ENCODE measurements at regions of chr11 and their contacts with region 1.

Region 1: GRCh38 chr11:120108154-120108865 is 29.6 kb downstream of the TRIM29 start:
- DNase-seq: peak; percentile 18 to 68 (median 52)
- ATAC-seq: peak; percentile 58
- H3K4me3 ChIP-seq: no peak overlapping the region
- H3K4me3 Mint-ChIP-seq: no peak overlapping the region
- H3K27ac ChIP-seq: no peak overlapping the region
- H3K27ac Mint-ChIP-seq: no peak overlapping the region
- H3K4me1 ChIP-seq: no peaks in the 10 kb centered on the region
- H3K4me1 Mint-ChIP-seq: no peaks in the 10 kb centered on the region
- H3K27me3 ChIP-seq: no peaks in the 10 kb centered on the region
- H3K27me3 Mint-ChIP-seq: peaks cover 18% of the 10 kb centered on the region
- CTCF ChIP-seq: peak; percentile 95

Region 2: GRCh38 chr11:119481021-119481666 is 627.2 kb before region 1 on chr11:
- CTCF ChIA-PET with region 1: no interaction called
- POLR2A ChIA-PET with region 1: no interaction called
- intact Hi-C with region 1: loop called in 1 of 2 experiments (anchors 1 kb)
- DNase-seq: peak; percentile 34 to 73 (median 60)
- ATAC-seq: peak; percentile 51
- H3K4me3 ChIP-seq: no peak overlapping the region
- H3K4me3 Mint-ChIP-seq: no peak overlapping the region
- H3K27ac ChIP-seq: no peak overlapping the region
- H3K27ac Mint-ChIP-seq: no peak overlapping the region
- H3K4me1 ChIP-seq: no peaks in the 10 kb centered on the region
- H3K4me1 Mint-ChIP-seq: no peaks in the 10 kb centered on the region
- H3K27me3 ChIP-seq: peaks cover 2 to 5% of the 10 kb centered on the region in 2 experiments
- H3K27me3 Mint-ChIP-seq: peaks cover 32% of the 10 kb centered on the region
- CTCF ChIP-seq: peak; percentile 78

Region 3: DNA sequence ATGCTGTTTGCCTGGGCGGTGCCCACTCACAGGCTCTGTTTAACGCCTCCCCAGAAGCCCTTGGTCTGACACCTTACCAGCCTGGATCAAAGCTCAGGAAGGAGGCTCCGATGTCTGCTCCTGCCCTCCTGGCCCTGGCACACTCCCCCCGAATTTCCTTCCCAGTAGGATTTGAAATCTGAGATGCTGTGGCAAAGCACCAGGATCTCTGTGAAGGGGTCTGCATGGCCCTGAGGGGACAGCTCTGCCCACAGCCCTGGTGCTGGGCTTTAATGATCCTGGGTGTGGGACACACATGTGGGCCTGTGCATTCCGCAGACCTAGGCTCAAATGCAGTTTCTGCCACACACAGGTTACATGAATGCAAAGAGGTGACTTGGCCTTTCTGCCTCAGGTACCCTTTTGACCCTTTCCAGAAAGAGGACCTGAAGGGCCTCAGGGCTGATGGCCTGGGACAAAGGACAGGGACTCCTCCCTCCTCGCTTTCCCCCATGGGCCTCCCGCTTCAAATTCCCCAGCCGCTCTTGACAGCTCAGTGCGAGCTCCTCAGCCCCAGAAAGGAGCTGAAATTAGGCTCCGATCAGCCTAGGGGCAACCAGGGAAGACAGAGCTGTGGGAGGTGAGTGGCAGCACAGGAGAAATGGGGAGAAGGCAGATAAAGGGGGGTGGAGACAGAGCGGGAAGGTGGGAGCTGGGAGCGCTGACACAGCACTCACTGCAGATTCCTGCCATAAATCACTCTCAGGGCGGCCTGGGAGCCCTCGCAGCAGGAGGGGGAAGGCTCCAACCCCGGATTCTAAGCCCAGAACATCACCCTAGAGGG is 11.7 kb before region 1 on chr11:
- CTCF ChIA-PET with region 1: interaction called, 17 read pairs
- POLR2A ChIA-PET with region 1: no interaction called
- intact Hi-C with region 1: no loop called
- DNase-seq: no peak
- ATAC-seq: no peak
- H3K4me3 ChIP-seq: no peak overlapping the region
- H3K4me3 Mint-ChIP-seq: no peak overlapping the region
- H3K27ac ChIP-seq: no peak overlapping the region
- H3K27ac Mint-ChIP-seq: no peak overlapping the region
- H3K4me1 ChIP-seq: no peaks in the 10 kb centered on the region
- H3K4me1 Mint-ChIP-seq: no peaks in the 10 kb centered on the region
- H3K27me3 ChIP-seq: no peaks in the 10 kb centered on the region
- H3K27me3 Mint-ChIP-seq: peaks cover 16% of the 10 kb centered on the region
- CTCF ChIP-seq: no peak

Region 4: GRCh38 chr11:120131941-120132675 is 23.8 kb after region 1 on chr11:
- CTCF ChIA-PET with region 1: no interaction called
- POLR2A ChIA-PET with region 1: no interaction called
- intact Hi-C with region 1: no loop called
- DNase-seq: peak in 1 of 9 experiments; percentile 35
- ATAC-seq: no peak
- H3K4me3 ChIP-seq: no peak overlapping the region
- H3K4me3 Mint-ChIP-seq: no peak overlapping the region
- H3K27ac ChIP-seq: no peak overlapping the region
- H3K27ac Mint-ChIP-seq: no peak overlapping the region
- H3K4me1 ChIP-seq: no peaks in the 10 kb centered on the region
- H3K4me1 Mint-ChIP-seq: no peaks in the 10 kb centered on the region
- H3K27me3 ChIP-seq: no peaks in the 10 kb centered on the region
- H3K27me3 Mint-ChIP-seq: peaks cover 6% of the 10 kb centered on the region
- CTCF ChIP-seq: no peak

Region 5: GRCh38 chr11:120153221-120153620 is 44.9 kb after region 1 on chr11:
- CTCF ChIA-PET with region 1: no interaction called
- POLR2A ChIA-PET with region 1: no interaction called
- intact Hi-C with region 1: no loop called
- DNase-seq: no peak
- ATAC-seq: no peak
- H3K4me3 ChIP-seq: no peak overlapping the region
- H3K4me3 Mint-ChIP-seq: no peak overlapping the region
- H3K27ac ChIP-seq: no peak overlapping the region
- H3K27ac Mint-ChIP-seq: no peak overlapping the region
- H3K4me1 ChIP-seq: no peaks in the 10 kb centered on the region
- H3K4me1 Mint-ChIP-seq: no peaks in the 10 kb centered on the region
- H3K27me3 ChIP-seq: no peaks in the 10 kb centered on the region
- H3K27me3 Mint-ChIP-seq: peaks cover 14% of the 10 kb centered on the region
- CTCF ChIP-seq: no peak